ENCODE measurements at regions of chr17 and their contacts with region 1.

Region 1: DNA sequence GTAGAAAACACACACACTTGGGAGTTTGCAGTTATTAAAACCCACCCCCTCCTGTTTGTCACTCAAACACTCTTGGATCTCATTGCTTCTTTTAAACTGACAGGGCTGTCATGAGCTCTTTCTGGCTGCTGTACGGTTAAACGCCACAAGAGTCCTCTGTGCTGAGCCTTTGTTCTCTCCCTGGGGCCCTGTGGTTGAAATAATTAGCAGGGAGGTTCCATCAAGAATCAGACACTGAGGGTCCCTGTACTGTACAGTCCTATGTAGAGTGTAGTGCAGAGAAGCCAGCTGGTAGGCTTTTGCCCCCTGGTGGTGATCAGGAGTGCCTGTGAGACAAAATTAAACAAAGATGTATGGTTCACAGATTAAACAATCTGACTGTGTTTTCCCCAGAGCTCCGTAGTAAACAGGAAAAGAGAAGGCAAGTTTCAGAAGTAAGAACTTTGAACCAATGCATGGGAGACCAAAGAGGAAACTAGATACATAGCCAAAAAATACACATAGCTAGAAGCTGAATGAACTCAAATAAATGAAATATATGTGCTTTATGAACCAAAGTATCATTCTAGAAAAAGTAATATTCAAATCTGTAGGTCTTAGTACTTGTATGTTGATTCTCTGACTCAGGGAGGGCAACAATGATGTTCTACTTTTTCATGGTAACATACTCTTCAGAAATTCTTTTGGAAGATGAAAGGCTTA is 1.4 kb upstream of the SSH2 start:
- DNase-seq: peak; percentile 42 to 90 (median 58)
- ATAC-seq: peak; percentile 68
- H3K4me3 ChIP-seq: peak overlapping the region; percentile 92
- H3K4me3 Mint-ChIP-seq: no peak overlapping the region
- H3K27ac ChIP-seq: no peak overlapping the region
- H3K27ac Mint-ChIP-seq: no peak overlapping the region
- H3K4me1 ChIP-seq: peaks cover 18% of the 10 kb centered on the region
- H3K4me1 Mint-ChIP-seq: peaks cover 30% of the 10 kb centered on the region
- H3K27me3 ChIP-seq: no peaks in the 10 kb centered on the region
- H3K27me3 Mint-ChIP-seq: no peaks in the 10 kb centered on the region
- CTCF ChIP-seq: peak; percentile 87

Region 2: DNA sequence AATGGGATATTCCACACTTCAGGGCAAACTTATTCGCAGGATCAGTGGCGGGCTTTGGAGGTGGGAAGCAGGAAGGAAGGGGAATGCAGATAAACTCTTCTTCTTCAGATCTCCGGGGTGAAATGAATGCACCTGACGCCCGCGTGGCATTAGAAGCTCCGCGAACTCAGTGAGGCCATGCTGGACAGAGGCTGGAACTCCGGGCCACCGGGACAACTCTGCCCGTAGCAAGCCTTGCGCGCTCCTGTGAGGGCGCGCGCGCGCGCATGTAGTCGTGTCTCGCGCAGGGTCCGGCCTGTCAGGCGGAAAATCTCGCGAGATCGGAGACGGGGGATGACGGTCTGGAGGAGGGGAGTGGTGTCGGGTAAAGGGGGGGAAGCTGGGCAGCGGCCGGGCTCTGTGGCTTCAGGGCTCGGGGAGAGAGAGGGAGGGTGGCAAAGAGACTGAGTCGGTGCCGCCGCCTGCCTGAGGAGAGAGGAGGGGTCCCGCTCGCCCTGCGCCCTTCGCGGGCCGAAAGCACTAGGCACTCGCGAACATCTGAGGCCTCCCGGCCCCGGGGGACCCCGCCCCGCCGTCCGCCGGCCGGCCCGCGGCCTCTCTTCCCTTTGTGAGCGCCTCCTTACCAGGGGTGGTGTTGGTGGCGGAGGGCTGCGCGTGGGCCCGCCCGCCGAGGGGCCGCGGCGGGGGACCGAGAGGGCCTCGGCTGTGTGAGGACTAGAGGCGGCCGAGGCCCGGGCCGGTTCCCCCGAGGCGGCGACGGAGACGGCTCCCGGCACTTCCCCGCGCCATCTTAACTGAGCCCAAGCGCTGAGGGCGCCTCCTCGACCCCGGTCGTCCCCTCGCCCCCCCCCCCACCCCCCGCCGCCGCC is 541.2 kb before region 1 on chr17 and contains the start of gene TAOK1:
- CTCF ChIA-PET with region 1: no interaction called
- POLR2A ChIA-PET with region 1: interaction called, 3 read pairs
- intact Hi-C with region 1: loop called in 1 of 2 experiments (anchors 5 kb)
- DNase-seq: peak; percentile 93 to 99 (median 98)
- ATAC-seq: peak; percentile 89
- H3K4me3 ChIP-seq: peak within 1 kb of the TSS; percentile 88
- H3K4me3 Mint-ChIP-seq: peak within 1 kb of the TSS; percentile 99
- H3K27ac ChIP-seq: peak within 1 kb of the TSS; percentile 79 to 93
- H3K27ac Mint-ChIP-seq: peak within 1 kb of the TSS; percentile 97
- H3K4me1 ChIP-seq: peaks cover 20% of the 10 kb centered on the region
- H3K4me1 Mint-ChIP-seq: peaks cover 47% of the 10 kb centered on the region
- H3K27me3 ChIP-seq: no peaks in the 10 kb centered on the region
- H3K27me3 Mint-ChIP-seq: no peaks in the 10 kb centered on the region
- CTCF ChIP-seq: no peak
- total RNA-seq, gene TAOK1: 33.1 to 33.8 TPM

Region 3: GRCh38 chr17:29617125-29617480 is 314.3 kb before region 1 on chr17:
- CTCF ChIA-PET with region 1: interaction called, 16 read pairs
- POLR2A ChIA-PET with region 1: interaction called, 18 read pairs
- intact Hi-C with region 1: loop called in 1 of 2 experiments (anchors 10 kb)
- DNase-seq: peak; percentile 81 to 96 (median 88)
- ATAC-seq: peak; percentile 69
- H3K4me3 ChIP-seq: peak overlapping the region; percentile 68
- H3K4me3 Mint-ChIP-seq: peak overlapping the region; percentile 91
- H3K27ac ChIP-seq: no peak overlapping the region
- H3K27ac Mint-ChIP-seq: peak overlapping the region; percentile 78
- H3K4me1 ChIP-seq: peaks cover 67% of the 10 kb centered on the region
- H3K4me1 Mint-ChIP-seq: peaks cover 47% of the 10 kb centered on the region
- H3K27me3 ChIP-seq: no peaks in the 10 kb centered on the region
- H3K27me3 Mint-ChIP-seq: no peaks in the 10 kb centered on the region
- CTCF ChIP-seq: peak; percentile 65

Region 4: DNA sequence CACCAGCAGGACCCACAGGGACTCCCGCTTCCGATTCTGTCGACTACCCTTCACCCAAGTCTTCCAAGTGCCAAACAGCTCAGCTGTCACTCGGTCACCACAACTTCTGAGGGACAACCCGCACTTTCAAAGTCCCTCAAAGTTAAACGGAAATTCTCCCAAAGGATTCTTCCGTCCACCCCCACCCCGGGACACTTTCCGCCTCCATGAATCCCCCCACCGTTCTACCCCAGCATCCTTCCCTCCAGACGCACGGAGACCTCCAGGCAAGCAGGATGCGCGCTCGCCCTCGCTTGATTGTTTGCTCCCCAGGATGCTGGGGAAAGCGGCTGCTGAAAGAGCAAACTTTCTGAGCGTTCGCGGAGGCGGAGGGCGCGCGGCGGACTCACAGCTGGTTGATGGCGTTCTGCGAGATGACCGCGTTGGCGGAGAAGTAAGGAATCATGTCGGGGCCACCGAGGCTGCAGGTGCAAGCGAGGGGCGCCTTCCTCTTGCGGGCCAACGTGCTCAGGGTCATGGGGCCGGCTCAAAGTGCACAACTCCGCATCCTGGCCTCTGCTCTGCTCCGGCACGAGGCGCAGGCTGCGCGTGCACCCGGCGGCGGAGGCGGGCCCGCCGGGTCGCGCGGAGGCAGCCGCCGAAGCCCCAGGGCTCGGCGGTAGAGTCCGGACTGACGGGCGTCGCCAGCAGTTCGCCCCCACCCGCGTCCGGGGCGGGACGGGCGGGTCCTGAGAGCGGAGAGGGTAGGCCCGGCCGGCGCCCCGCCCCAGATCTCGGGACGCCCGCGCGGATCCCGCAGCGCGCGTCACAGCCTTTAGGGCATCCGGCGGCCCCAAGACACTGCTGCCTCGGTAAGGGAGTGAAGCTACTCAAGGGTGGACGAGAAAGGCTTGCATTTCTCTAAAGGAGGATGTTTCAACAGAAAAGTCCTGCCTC is 170.4 kb before region 1 on chr17:
- CTCF ChIA-PET with region 1: interaction called, 3 read pairs
- POLR2A ChIA-PET with region 1: interaction called, 19 read pairs
- intact Hi-C with region 1: no loop called
- DNase-seq: peak; percentile 77 to 97 (median 88)
- ATAC-seq: peak; percentile 83
- H3K4me3 ChIP-seq: peak overlapping the region; percentile 91
- H3K4me3 Mint-ChIP-seq: peak overlapping the region; percentile 92
- H3K27ac ChIP-seq: peak overlapping the region; percentile 77 to 80
- H3K27ac Mint-ChIP-seq: peak overlapping the region; percentile 90
- H3K4me1 ChIP-seq: peaks cover 28% of the 10 kb centered on the region
- H3K4me1 Mint-ChIP-seq: peaks cover 41% of the 10 kb centered on the region
- H3K27me3 ChIP-seq: no peaks in the 10 kb centered on the region
- H3K27me3 Mint-ChIP-seq: no peaks in the 10 kb centered on the region
- CTCF ChIP-seq: no peak

Region 5: GRCh38 chr17:29825604-29826003 is 105.8 kb before region 1 on chr17:
- CTCF ChIA-PET with region 1: interaction called, 33 read pairs
- POLR2A ChIA-PET with region 1: interaction called, 6 read pairs
- intact Hi-C with region 1: loop called in 1 of 2 experiments (anchors 5 kb)
- DNase-seq: no peak
- ATAC-seq: no peak
- H3K4me3 ChIP-seq: no peak overlapping the region
- H3K4me3 Mint-ChIP-seq: no peak overlapping the region
- H3K27ac ChIP-seq: no peak overlapping the region
- H3K27ac Mint-ChIP-seq: no peak overlapping the region
- H3K4me1 ChIP-seq: no peaks in the 10 kb centered on the region
- H3K4me1 Mint-ChIP-seq: peaks cover 55% of the 10 kb centered on the region
- H3K27me3 ChIP-seq: no peaks in the 10 kb centered on the region
- H3K27me3 Mint-ChIP-seq: no peaks in the 10 kb centered on the region
- CTCF ChIP-seq: no peak

Region 6: GRCh38 chr17:30093463-30094147 is 162.2 kb after region 1 on chr17:
- CTCF ChIA-PET with region 1: interaction called, 3 read pairs
- POLR2A ChIA-PET with region 1: no interaction called
- intact Hi-C with region 1: loop called in 1 of 2 experiments (anchors 5 kb)
- DNase-seq: peak in 11 of 14 experiments; percentile 5 to 74 (median 24)
- ATAC-seq: peak; percentile 51
- H3K4me3 ChIP-seq: no peak overlapping the region
- H3K4me3 Mint-ChIP-seq: no peak overlapping the region
- H3K27ac ChIP-seq: no peak overlapping the region
- H3K27ac Mint-ChIP-seq: no peak overlapping the region
- H3K4me1 ChIP-seq: peaks cover 6% of the 10 kb centered on the region
- H3K4me1 Mint-ChIP-seq: peaks cover 6% of the 10 kb centered on the region
- H3K27me3 ChIP-seq: peaks cover 3 to 4% of the 10 kb centered on the region in 2 experiments
- H3K27me3 Mint-ChIP-seq: peaks cover 26% of the 10 kb centered on the region
- CTCF ChIP-seq: peak; percentile 85

Region 7: DNA sequence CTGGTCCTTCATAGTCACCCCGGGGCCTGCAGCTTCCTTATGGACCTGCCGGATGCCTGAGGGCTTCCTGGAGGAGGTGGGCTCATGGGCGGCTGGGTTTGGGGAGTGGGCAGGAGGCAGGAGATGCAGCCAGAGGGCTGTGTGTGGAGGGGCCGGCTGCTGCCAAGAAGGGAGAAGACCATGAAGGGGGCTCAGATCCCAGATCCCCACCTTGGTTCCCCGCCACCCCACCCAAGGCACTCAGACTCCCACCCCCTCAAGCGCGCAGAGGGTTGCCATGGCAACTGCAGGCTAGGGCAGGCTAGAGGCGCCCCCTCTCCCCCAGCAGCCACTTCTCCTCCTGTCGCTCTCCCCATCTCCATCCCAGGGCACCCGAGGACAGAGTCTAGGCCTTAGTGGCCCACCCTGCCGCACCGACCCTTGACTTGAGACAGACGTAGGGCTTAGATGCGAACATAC is 788.7 kb after region 1 on chr17:
- CTCF ChIA-PET with region 1: no interaction called
- POLR2A ChIA-PET with region 1: no interaction called
- intact Hi-C with region 1: no loop called
- DNase-seq: peak in 1 of 14 experiments; percentile 22
- ATAC-seq: no peak
- H3K4me3 ChIP-seq: no peak overlapping the region
- H3K4me3 Mint-ChIP-seq: no peak overlapping the region
- H3K27ac ChIP-seq: no peak overlapping the region
- H3K27ac Mint-ChIP-seq: no peak overlapping the region
- H3K4me1 ChIP-seq: peaks cover 10% of the 10 kb centered on the region
- H3K4me1 Mint-ChIP-seq: peaks cover 10% of the 10 kb centered on the region
- H3K27me3 ChIP-seq: no peaks in the 10 kb centered on the region
- H3K27me3 Mint-ChIP-seq: no peaks in the 10 kb centered on the region
- CTCF ChIP-seq: no peak

Measured in CD4-positive, alpha-beta T cell (primary cell).